Right ventricle myocardium inferior (tissue), 1 donor: ENCODE measurements at regions of chrX and their contacts with region 1.

Region 1: GRCh38 chrX:136767104-136767941 is 13.4 kb downstream of the ARHGEF6 start:
- DNase-seq: peak; percentile 87
- ATAC-seq: peak; percentile 90

Region 2: GRCh38 chrX:136731207-136731782 is 36.0 kb before region 1 on chrX:
- intact Hi-C with region 1: loop called (anchors 1 kb)
- DNase-seq: no peak
- ATAC-seq: no peak